CD8-positive, alpha-beta T cell (primary cell): ENCODE measurements at regions of chr20 and their contacts with region 1.

Region 1: GRCh38 chr20:543369-544152 is at the start of gene CSNK2A1:
- DNase-seq: peak; percentile 95 to 99 (median 96)
- ATAC-seq: peak; percentile 90
- H3K4me3 ChIP-seq: peak within 1 kb of the TSS; percentile 36 to 98
- H3K4me3 Mint-ChIP-seq: peak within 1 kb of the TSS; percentile 96
- H3K27ac ChIP-seq: peak within 1 kb of the TSS; percentile 74 to 92
- H3K27ac Mint-ChIP-seq: peak within 1 kb of the TSS; percentile 100
- H3K4me1 ChIP-seq: peaks cover 27% of the 10 kb centered on the region
- H3K4me1 Mint-ChIP-seq: peaks cover 55% of the 10 kb centered on the region
- H3K27me3 ChIP-seq: no peaks in the 10 kb centered on the region
- H3K27me3 Mint-ChIP-seq: no peaks in the 10 kb centered on the region
- CTCF ChIP-seq: no peak
- total RNA-seq, gene CSNK2A1: 63.6 to 66.0 TPM

Region 2: GRCh38 chr20:324177-325044 is 219.2 kb before region 1 on chr20:
- CTCF ChIA-PET with region 1: no interaction called
- POLR2A ChIA-PET with region 1: no interaction called
- intact Hi-C with region 1: loop called in 1 of 2 experiments (anchors 1 kb)
- DNase-seq: peak; percentile 74 to 93 (median 91)
- ATAC-seq: peak; percentile 54
- H3K4me3 ChIP-seq: peak overlapping the region; percentile 74 to 97
- H3K4me3 Mint-ChIP-seq: peak overlapping the region; percentile 89
- H3K27ac ChIP-seq: peak overlapping the region; percentile 62 to 71
- H3K27ac Mint-ChIP-seq: peak overlapping the region; percentile 88
- H3K4me1 ChIP-seq: peaks cover 23% of the 10 kb centered on the region
- H3K4me1 Mint-ChIP-seq: peaks cover 35% of the 10 kb centered on the region
- H3K27me3 ChIP-seq: no peaks in the 10 kb centered on the region
- H3K27me3 Mint-ChIP-seq: no peaks in the 10 kb centered on the region
- CTCF ChIP-seq: peak; percentile 43

Region 3: DNA sequence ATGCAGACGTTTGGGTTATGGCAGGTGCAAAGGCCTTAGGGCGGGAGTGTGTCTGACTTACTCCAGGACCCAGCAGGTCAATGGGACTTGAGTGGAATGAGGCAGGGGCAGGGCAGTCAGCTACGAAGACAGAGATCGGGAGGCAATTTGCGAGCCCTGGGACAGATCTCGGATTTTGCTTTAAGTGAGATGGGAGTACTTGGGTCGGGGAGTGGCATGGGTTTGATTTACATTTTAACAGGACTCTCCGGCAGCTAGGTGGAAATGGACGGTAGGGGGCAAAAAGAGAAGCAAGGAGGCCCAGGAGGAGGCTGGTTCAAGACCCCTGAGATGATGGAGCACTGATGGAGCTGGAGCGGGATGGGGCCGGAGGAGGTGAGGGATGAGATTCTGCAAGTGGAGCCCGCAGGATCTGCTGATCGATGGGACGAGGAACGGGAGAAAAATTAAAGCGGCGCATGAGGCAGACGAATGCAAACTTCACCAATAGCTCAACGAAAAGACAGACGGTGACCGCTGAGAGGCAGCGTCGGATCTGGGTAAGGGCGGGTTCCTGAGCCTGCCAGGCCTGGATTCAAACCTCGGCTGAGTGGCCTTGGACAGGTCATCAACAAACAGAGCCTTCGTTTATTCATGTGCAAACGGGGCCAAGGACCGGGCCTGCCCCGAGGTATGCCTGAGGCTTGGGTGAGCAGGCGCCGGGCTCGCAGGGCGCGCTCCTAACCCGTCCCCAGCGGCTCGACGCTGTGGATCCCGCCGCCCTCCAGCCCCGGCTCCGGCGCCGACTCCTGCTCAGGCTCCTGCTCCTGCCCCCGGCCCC is 136.2 kb before region 1 on chr20:
- CTCF ChIA-PET with region 1: interaction called, 3 read pairs
- POLR2A ChIA-PET with region 1: no interaction called
- intact Hi-C with region 1: loop called in 1 of 2 experiments (anchors 1 kb)
- DNase-seq: peak in 7 of 9 experiments; percentile 48 to 83 (median 68)
- ATAC-seq: peak; percentile 71
- H3K4me3 ChIP-seq: peak overlapping the region; percentile 56 to 71
- H3K4me3 Mint-ChIP-seq: peak overlapping the region; percentile 91
- H3K27ac ChIP-seq: peak overlapping the region; percentile 9 to 41
- H3K27ac Mint-ChIP-seq: peak overlapping the region; percentile 95
- H3K4me1 ChIP-seq: peaks cover 34% of the 10 kb centered on the region
- H3K4me1 Mint-ChIP-seq: peaks cover 47% of the 10 kb centered on the region
- H3K27me3 ChIP-seq: no peaks in the 10 kb centered on the region
- H3K27me3 Mint-ChIP-seq: no peaks in the 10 kb centered on the region
- CTCF ChIP-seq: peak; percentile 45

Region 4: GRCh38 chr20:653110-653589 is 109.6 kb after region 1 on chr20 and contains the start of gene SRXN1:
- CTCF ChIA-PET with region 1: no interaction called
- POLR2A ChIA-PET with region 1: no interaction called
- intact Hi-C with region 1: loop called in 1 of 2 experiments (anchors 10 kb)
- DNase-seq: peak; percentile 49 to 88 (median 77)
- ATAC-seq: peak; percentile 92
- H3K4me3 ChIP-seq: peak within 1 kb of the TSS; percentile 59 to 74
- H3K4me3 Mint-ChIP-seq: peak within 1 kb of the TSS; percentile 77
- H3K27ac ChIP-seq: peak within 1 kb of the TSS; percentile 9 to 69
- H3K27ac Mint-ChIP-seq: peak within 1 kb of the TSS; percentile 69
- H3K4me1 ChIP-seq: peaks cover 15% of the 10 kb centered on the region
- H3K4me1 Mint-ChIP-seq: peaks cover 23% of the 10 kb centered on the region
- H3K27me3 ChIP-seq: no peaks in the 10 kb centered on the region
- H3K27me3 Mint-ChIP-seq: peaks cover 13% of the 10 kb centered on the region
- CTCF ChIP-seq: peak; percentile 70
- total RNA-seq, gene SRXN1: 1.3 to 1.7 TPM

Region 5: DNA sequence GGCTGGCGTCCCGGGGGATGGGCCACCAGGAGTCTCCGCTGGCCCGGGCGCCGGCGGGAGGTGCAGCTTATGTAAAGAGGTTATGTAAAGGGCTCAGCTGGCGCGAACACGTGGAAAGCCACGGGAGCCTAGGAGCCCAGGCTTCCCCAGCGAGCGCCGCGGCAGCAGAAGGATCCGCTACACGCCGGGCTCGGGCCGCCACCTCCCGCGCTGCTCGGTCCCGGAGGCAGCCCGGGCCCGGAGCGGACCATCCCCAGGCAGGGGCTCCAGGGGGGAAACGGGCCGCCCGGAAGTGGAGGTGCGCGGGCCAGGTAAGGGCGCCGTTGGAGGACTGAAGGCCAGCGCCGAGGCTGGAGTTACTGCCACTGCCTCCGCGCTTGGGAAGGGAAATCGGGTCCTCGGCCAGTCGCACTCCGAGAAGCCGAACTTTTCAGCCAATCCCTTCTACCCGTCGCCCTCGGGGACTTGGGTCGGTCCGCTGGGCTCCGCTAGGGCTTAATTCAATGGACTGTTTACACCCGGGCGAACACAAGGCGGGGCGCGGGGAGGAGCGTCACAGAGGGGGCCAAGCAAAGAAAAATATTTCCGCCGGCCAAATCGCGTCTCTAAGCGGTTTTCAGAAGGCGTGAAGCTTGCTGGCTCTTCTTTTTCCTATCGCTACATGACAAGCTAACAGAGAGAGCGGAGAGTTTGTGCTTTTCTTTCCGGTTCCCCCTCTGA is 1558.5 kb after region 1 on chr20:
- CTCF ChIA-PET with region 1: no interaction called
- POLR2A ChIA-PET with region 1: no interaction called
- intact Hi-C with region 1: loop called in 1 of 2 experiments (anchors 5 kb)
- DNase-seq: peak; percentile 79 to 95 (median 91)
- ATAC-seq: peak; percentile 75
- H3K4me3 ChIP-seq: peak overlapping the region; percentile 79 to 100
- H3K4me3 Mint-ChIP-seq: peak overlapping the region; percentile 95
- H3K27ac ChIP-seq: peak overlapping the region; percentile 98 to 100
- H3K27ac Mint-ChIP-seq: peak overlapping the region; percentile 100
- H3K4me1 ChIP-seq: peaks cover 48% of the 10 kb centered on the region
- H3K4me1 Mint-ChIP-seq: peaks cover 41% of the 10 kb centered on the region
- H3K27me3 ChIP-seq: no peaks in the 10 kb centered on the region
- H3K27me3 Mint-ChIP-seq: no peaks in the 10 kb centered on the region
- CTCF ChIP-seq: no peak